ENCODE measurements at regions of chr22 and their contacts with region 1.

Region 1: GRCh38 chr22:43230971-43231723 is 44.2 kb upstream of the TTLL12 start:
- DNase-seq: peak; percentile 74
- H3K4me3 Mint-ChIP-seq: no peak overlapping the region
- H3K27ac Mint-ChIP-seq: no peak overlapping the region
- H3K4me1 Mint-ChIP-seq: peaks cover 2% of the 10 kb centered on the region
- H3K27me3 Mint-ChIP-seq: no peaks in the 10 kb centered on the region

Region 2: GRCh38 chr22:43273902-43274484 is 42.8 kb after region 1 on chr22:
- CTCF ChIA-PET with region 1: interaction called, 3 read pairs
- intact Hi-C with region 1: loop called (anchors 2 kb)
- DNase-seq: peak; percentile 62
- H3K4me3 Mint-ChIP-seq: no peak overlapping the region
- H3K27ac Mint-ChIP-seq: no peak overlapping the region
- H3K4me1 Mint-ChIP-seq: no peaks in the 10 kb centered on the region
- H3K27me3 Mint-ChIP-seq: no peaks in the 10 kb centered on the region